Left cardiac atrium (tissue), 4 donors: ENCODE measurements at regions of chr19 and their contacts with region 1.

Region 1: GRCh38 chr19:14081325-14082093 is 4.1 kb downstream of the C19orf67 start:
- DNase-seq: peak; percentile 99
- ATAC-seq: peak; percentile 95 to 96

Region 2: GRCh38 chr19:14031719-14032480 is 49.6 kb before region 1 on chr19 and contains the start of gene IL27RA:
- intact Hi-C with region 1: no loop called
- DNase-seq: peak; percentile 71
- ATAC-seq: peak; percentile 80 to 83
- total RNA-seq, gene IL27RA: 4.7 to 6.2 TPM

Region 3: DNA sequence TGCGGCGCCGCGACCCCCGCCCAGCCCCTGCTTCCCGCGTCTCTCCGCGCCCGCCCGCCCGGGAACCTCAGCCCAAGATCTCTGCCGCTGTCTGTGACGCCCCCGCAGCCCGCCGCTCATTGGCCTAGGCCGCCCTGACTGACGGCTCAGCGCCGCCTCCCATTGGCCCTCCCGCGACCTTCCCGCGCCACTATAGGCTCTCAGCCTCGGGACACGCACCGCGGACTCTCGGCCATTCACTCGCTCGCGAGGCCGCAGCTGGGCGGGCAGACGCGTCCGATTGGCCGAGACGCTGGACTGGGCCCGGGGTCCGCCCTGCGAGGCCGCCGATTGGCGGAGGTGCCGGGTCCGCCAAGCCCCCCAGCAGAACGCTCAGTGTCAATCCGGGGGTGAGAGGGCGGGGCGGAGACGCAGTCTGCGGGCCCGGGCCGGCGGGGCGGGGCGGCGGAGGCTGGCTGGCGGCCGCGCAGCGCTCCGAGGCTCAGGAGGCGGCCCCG is 36.2 kb after region 1 on chr19 and contains the start of gene PRKACA:
- intact Hi-C with region 1: loop called in 1 of 2 experiments (anchors 5 kb)
- DNase-seq: peak; percentile 99
- ATAC-seq: peak; percentile 84 to 93
- total RNA-seq, gene PRKACA: 348 to 418 TPM

Region 4: GRCh38 chr19:14136509-14137281 is 55.2 kb after region 1 on chr19 and contains the start of gene ASF1B:
- intact Hi-C with region 1: loop called in 1 of 2 experiments (anchors 5 kb)
- DNase-seq: peak; percentile 99
- ATAC-seq: peak; percentile 94 to 96
- total RNA-seq, gene ASF1B: 0.92 to 3.0 TPM